ENCODE measurements at regions of chr18 and their contacts with region 1.

Region 1: DNA sequence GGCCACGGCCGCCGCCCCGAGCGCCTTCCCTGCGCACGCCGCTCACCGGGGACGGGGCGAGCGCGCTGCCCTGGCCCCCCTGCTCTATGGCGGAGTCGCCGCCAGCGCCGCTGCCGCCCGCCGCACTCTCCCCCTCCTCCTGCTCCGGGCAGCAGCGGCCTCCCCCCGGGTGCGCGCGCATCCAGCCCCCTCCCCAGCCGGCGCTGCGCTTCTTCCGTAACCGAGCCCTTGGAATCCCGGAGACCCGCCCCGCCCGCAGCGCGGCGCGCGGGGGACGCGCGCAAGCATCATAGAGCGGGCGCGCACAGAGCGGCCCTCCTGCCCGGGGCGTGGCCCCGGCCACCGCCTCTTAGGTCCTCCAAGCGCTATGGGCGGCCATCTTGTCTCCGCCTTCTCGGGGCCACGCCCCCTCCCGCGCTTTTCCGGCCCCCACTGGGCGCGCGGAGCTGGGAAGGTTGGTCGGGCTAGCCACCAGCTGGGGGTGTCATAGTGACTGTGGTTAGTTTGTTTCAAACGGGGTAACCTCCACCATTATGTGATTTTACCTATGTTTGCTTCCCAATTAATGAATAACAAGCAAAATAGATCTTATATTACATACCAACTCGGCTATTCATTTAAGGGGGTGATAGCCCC is at the start of gene MBD2:
- DNase-seq: peak; percentile 96
- ATAC-seq: peak; percentile 91
- H3K4me3 Mint-ChIP-seq: peak within 1 kb of the TSS; percentile 94
- H3K27ac Mint-ChIP-seq: peak within 1 kb of the TSS; percentile 95
- H3K4me1 Mint-ChIP-seq: peaks cover 44% of the 10 kb centered on the region
- H3K27me3 Mint-ChIP-seq: no peaks in the 10 kb centered on the region
- CTCF ChIP-seq: no peak
- total RNA-seq, gene MBD2: 146 and 150 TPM in 2 replicates

Region 2: GRCh38 chr18:54247511-54248175 is 23.1 kb after region 1 on chr18:
- CTCF ChIA-PET with region 1: interaction called, 6 read pairs
- POLR2A ChIA-PET with region 1: interaction called, 19 read pairs
- intact Hi-C with region 1: loop called (anchors 1 kb)
- DNase-seq: no peak
- ATAC-seq: no peak
- H3K4me3 Mint-ChIP-seq: no peak overlapping the region
- H3K27ac Mint-ChIP-seq: peak overlapping the region; percentile 87
- H3K4me1 Mint-ChIP-seq: peaks cover 45% of the 10 kb centered on the region
- H3K27me3 Mint-ChIP-seq: no peaks in the 10 kb centered on the region
- CTCF ChIP-seq: no peak

Region 3: DNA sequence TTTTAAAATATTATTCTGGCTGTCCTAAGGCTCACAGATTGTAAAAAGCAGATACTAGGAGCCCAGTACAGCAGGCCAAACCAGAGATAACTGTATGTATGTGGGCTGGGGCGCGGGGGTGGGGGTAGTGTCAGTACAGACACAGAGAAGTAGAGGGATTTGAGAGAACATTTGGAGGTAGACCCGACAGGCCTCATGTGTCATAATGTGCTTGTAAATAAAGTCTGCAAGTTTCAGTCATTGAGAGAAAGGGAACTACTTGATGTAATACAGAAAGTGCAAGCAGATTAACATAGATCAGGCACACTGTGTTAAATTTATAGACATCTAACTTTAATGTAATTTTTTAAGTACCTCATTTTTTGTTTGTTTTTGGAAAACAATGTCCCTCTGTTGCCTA is 37.4 kb after region 1 on chr18:
- CTCF ChIA-PET with region 1: interaction called, 3 read pairs
- POLR2A ChIA-PET with region 1: interaction called, 11 read pairs
- intact Hi-C with region 1: no loop called
- DNase-seq: no peak
- ATAC-seq: peak; percentile 81
- H3K4me3 Mint-ChIP-seq: peak overlapping the region; percentile 67
- H3K27ac Mint-ChIP-seq: peak overlapping the region; percentile 93
- H3K4me1 Mint-ChIP-seq: peaks cover 60% of the 10 kb centered on the region
- H3K27me3 Mint-ChIP-seq: no peaks in the 10 kb centered on the region
- CTCF ChIP-seq: no peak

Region 4: GRCh38 chr18:54330768-54331548 is 106.5 kb after region 1 on chr18:
- CTCF ChIA-PET with region 1: interaction called, 11 read pairs
- POLR2A ChIA-PET with region 1: no interaction called
- intact Hi-C with region 1: loop called (anchors 2 kb)
- DNase-seq: no peak
- ATAC-seq: no peak
- H3K4me3 Mint-ChIP-seq: no peak overlapping the region
- H3K27ac Mint-ChIP-seq: no peak overlapping the region
- H3K4me1 Mint-ChIP-seq: peaks cover 2% of the 10 kb centered on the region
- H3K27me3 Mint-ChIP-seq: peaks cover 6% of the 10 kb centered on the region
- CTCF ChIP-seq: no peak

Region 5: GRCh38 chr18:54392543-54393023 is 168.1 kb after region 1 on chr18:
- CTCF ChIA-PET with region 1: interaction called, 11 read pairs
- POLR2A ChIA-PET with region 1: no interaction called
- intact Hi-C with region 1: loop called (anchors 1 kb)
- DNase-seq: no peak
- ATAC-seq: peak; percentile 65
- H3K4me3 Mint-ChIP-seq: no peak overlapping the region
- H3K27ac Mint-ChIP-seq: no peak overlapping the region
- H3K4me1 Mint-ChIP-seq: peaks cover 2% of the 10 kb centered on the region
- H3K27me3 Mint-ChIP-seq: peaks cover 4% of the 10 kb centered on the region
- CTCF ChIP-seq: no peak

Region 6: DNA sequence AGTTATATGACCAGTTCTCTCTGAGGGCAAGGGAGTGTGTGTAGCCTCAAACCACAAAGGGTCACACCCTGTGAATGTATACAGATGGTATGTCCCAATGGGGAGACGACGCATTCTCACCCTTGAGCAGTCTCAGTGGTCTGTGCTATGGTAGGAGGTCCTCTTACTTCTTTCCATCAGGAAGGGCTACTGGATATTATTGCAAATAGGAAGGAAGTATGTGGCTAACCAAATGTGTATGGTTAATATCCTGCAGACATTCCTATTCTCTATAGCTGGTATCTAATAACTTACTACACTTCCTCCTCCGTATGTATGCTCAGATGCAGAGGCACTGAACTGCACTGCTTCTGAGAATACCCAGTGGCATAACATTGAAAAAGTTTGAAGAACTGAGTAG is 1041.5 kb after region 1 on chr18:
- CTCF ChIA-PET with region 1: no interaction called
- POLR2A ChIA-PET with region 1: no interaction called
- intact Hi-C with region 1: loop called (anchors 10 kb)
- DNase-seq: no peak
- ATAC-seq: peak; percentile 38
- H3K4me3 Mint-ChIP-seq: peak overlapping the region; percentile 44
- H3K27ac Mint-ChIP-seq: peak overlapping the region; percentile 93
- H3K4me1 Mint-ChIP-seq: peaks cover 73% of the 10 kb centered on the region
- H3K27me3 Mint-ChIP-seq: no peaks in the 10 kb centered on the region
- CTCF ChIP-seq: no peak